ENCODE measurements at regions of chr1 and their contacts with region 1.

Region 1: GRCh38 chr1:36323597-36324352 is at the start of gene EVA1B:
- DNase-seq: peak; percentile 82
- ATAC-seq: peak; percentile 63
- H3K4me3 ChIP-seq: peak within 1 kb of the TSS; percentile 78
- H3K27ac ChIP-seq: peak within 1 kb of the TSS; percentile 94
- H3K4me1 ChIP-seq: peaks cover 30% of the 10 kb centered on the region
- H3K27me3 ChIP-seq: no peaks in the 10 kb centered on the region
- CTCF ChIP-seq: no peak
- POLR2A ChIP-seq: no peak
- RAD21 ChIP-seq: no peak
- total RNA-seq, gene EVA1B: 49.8 and 63.3 TPM in 2 replicates

Region 2: GRCh38 chr1:36187800-36188593 is 135.8 kb before region 1 on chr1:
- CTCF ChIA-PET with region 1: no interaction called
- POLR2A ChIA-PET with region 1: no interaction called
- dilution Hi-C with region 1: no loop called
- in situ Hi-C with region 1: no loop called
- intact Hi-C with region 1: no loop called
- DNase-seq: peak; percentile 92
- ATAC-seq: peak; percentile 94
- H3K4me3 ChIP-seq: no peak overlapping the region
- H3K27ac ChIP-seq: peak overlapping the region; percentile 68
- H3K4me1 ChIP-seq: peaks cover 5% of the 10 kb centered on the region
- H3K27me3 ChIP-seq: no peaks in the 10 kb centered on the region
- CTCF ChIP-seq: peak; percentile 91
- POLR2A ChIP-seq: peak; percentile 61
- RAD21 ChIP-seq: peak; percentile 93

Region 3: GRCh38 chr1:36350659-36351226 is 27.0 kb after region 1 on chr1:
- CTCF ChIA-PET with region 1: interaction called, 4 read pairs
- POLR2A ChIA-PET with region 1: no interaction called
- dilution Hi-C with region 1: no loop called
- in situ Hi-C with region 1: no loop called
- intact Hi-C with region 1: loop called (anchors 2 kb)
- DNase-seq: peak; percentile 80
- ATAC-seq: peak; percentile 73
- H3K4me3 ChIP-seq: no peak overlapping the region
- H3K27ac ChIP-seq: peak overlapping the region; percentile 91
- H3K4me1 ChIP-seq: peaks cover 45% of the 10 kb centered on the region
- H3K27me3 ChIP-seq: no peaks in the 10 kb centered on the region
- CTCF ChIP-seq: no peak
- POLR2A ChIP-seq: no peak
- RAD21 ChIP-seq: no peak

Region 4: GRCh38 chr1:36385410-36386257 is 61.9 kb after region 1 on chr1 and contains the start of gene STK40:
- CTCF ChIA-PET with region 1: interaction called, 3 read pairs
- POLR2A ChIA-PET with region 1: interaction called, 6 read pairs
- dilution Hi-C with region 1: no loop called
- in situ Hi-C with region 1: no loop called
- intact Hi-C with region 1: loop called (anchors 5 kb)
- DNase-seq: peak; percentile 100
- ATAC-seq: peak; percentile 87
- H3K4me3 ChIP-seq: peak within 1 kb of the TSS; percentile 96
- H3K27ac ChIP-seq: peak within 1 kb of the TSS; percentile 94
- H3K4me1 ChIP-seq: peaks cover 20% of the 10 kb centered on the region
- H3K27me3 ChIP-seq: no peaks in the 10 kb centered on the region
- CTCF ChIP-seq: no peak
- POLR2A ChIP-seq: no peak; the same call in none of the 2 replicates
- RAD21 ChIP-seq: no peak
- total RNA-seq, gene STK40: 13.9 and 16.0 TPM in 2 replicates